Right ventricle myocardium inferior (tissue), 1 donor: ENCODE measurements at regions of chr4 and their contacts with region 1.

Region 1: GRCh38 chr4:73245955-73246354 is 12.6 kb downstream of the ANKRD17 start:
- DNase-seq: no peak
- ATAC-seq: no peak

Region 2: GRCh38 chr4:73069338-73070073 is 176.4 kb before region 1 on chr4 and contains the start of gene COX18:
- intact Hi-C with region 1: no loop called
- DNase-seq: peak; percentile 99
- ATAC-seq: peak; percentile 97
- total RNA-seq, gene COX18: 14.9 TPM

Region 3: GRCh38 chr4:73230865-73231517 is 15.0 kb before region 1 on chr4:
- intact Hi-C with region 1: loop called (anchors 2 kb)
- DNase-seq: no peak
- ATAC-seq: no peak

Region 4: GRCh38 chr4:73308286-73308685 is 62.3 kb after region 1 on chr4:
- intact Hi-C with region 1: no loop called
- DNase-seq: no peak
- ATAC-seq: no peak